ENCODE measurements at regions of chr14 and their contacts with region 1.

Region 1: GRCh38 chr14:93939304-93940229 is 12.4 kb downstream of the FAM181A start:
- DNase-seq: no peak
- H3K4me3 ChIP-seq: peak overlapping the region; percentile 50
- CTCF ChIP-seq: peak; percentile 85

Region 2: DNA sequence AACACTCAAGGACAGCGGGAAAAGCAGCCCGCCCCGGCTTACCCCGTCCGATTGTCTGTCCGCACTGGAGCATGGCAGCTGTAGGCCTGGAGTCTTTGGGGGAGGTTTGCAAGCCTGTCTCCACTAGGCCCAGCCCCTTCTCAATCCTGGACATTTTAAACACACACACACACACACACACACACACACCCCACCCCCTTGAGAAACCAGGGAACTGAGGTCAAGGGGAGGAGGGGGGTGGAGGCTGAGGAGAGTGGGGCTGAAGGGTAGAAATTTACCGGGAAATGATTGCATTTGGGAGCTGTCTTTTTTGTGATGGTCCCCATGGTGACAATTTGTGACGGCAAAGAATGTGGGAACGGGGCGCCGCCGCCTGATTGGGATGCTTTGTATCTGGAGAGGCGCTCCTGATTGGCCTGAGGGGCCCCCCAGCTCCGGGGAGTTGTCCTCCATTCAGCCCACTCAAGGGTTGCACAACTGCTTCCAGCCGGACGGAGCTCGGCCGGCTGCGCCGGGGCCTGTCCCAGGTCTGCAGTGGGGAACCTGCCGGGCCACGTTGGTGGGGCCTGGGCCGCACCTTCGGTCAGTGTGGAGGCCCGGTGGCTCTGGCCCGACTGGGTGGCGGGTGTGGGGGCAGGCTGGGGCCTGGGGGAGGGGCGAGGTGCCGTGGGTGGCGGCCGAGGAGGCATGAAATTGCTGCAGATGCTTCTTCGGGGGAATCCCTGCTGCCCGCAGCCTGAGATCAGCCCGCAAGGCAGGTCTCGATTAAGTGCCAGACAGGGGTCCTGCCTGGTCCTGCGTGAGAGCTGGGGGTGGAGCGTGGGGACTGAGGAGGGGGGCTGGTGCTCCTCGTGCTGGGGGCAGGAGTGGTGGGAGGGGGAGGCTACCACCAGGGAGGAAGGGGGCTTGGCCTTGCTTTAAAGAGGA is 12.4 kb before region 1 on chr14 and contains the start of gene FAM181A:
- CTCF ChIA-PET with region 1: interaction called, 42 read pairs
- POLR2A ChIA-PET with region 1: no interaction called
- DNase-seq: no peak
- H3K4me3 ChIP-seq: no peak within 1 kb of the TSS
- CTCF ChIP-seq: no peak

Region 3: GRCh38 chr14:93975791-93976476 is 36.4 kb after region 1 on chr14:
- CTCF ChIA-PET with region 1: interaction called, 135 read pairs
- POLR2A ChIA-PET with region 1: no interaction called
- DNase-seq: no peak
- H3K4me3 ChIP-seq: no peak overlapping the region
- CTCF ChIP-seq: no peak

Region 4: DNA sequence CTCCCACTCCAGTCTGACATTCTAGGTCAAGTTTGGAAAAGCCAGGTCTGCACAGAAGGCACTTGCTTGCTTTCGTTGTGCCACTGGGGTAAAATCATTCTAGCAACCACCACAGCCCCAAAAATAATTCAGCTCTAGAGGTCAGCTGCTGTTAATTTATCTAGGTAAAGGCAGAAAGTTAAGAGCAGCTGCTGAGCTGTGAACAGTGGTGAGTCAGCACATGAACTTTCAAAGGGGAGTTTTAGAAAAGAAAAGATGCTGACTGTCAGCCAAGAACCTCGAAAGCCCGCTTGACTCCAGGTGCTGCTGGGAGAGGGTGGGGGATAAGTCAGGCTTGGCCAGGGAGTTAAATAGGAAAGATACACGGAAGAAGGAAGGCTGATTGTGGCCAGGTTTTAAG is 70.2 kb after region 1 on chr14:
- CTCF ChIA-PET with region 1: interaction called, 472 read pairs
- POLR2A ChIA-PET with region 1: no interaction called
- DNase-seq: no peak
- H3K4me3 ChIP-seq: no peak overlapping the region
- CTCF ChIP-seq: no peak

Region 5: DNA sequence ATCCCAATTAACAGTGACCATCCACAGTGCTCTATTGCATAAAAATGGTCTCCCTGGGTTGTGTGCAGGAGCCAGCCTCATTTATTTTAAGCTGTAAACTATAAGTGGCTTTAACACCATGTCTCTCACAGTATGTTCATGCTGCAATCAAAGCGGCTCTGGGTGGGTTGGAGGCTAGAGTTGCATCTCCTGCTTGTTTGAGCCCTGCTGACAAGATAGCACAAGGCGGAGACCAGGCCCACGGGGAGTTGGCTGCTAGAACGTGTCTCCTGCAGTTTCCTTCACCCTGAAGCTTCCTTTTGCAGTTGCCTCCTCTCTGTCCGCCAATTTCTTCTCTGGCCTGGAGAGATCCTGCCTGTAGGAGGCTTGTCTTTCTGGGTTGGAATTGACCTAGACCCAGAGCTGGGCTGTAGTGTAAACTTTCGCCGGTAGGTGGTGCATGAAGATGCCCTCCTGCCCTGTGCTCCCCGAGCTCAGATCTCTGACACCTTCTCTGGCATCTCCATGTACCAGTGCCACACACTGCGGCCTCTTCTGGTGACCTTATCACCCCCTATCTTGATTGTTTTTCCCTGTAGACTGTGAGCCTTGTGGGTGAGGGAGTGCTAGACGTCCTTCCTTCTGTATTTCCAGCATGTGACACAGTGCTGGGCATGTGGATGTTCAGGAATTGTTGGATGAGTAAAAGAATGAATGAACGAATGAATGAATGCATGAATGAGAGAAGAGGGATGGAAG is 96.9 kb after region 1 on chr14:
- CTCF ChIA-PET with region 1: interaction called, 46 read pairs
- POLR2A ChIA-PET with region 1: no interaction called
- DNase-seq: no peak
- H3K4me3 ChIP-seq: no peak overlapping the region
- CTCF ChIP-seq: peak; percentile 87

Region 6: DNA sequence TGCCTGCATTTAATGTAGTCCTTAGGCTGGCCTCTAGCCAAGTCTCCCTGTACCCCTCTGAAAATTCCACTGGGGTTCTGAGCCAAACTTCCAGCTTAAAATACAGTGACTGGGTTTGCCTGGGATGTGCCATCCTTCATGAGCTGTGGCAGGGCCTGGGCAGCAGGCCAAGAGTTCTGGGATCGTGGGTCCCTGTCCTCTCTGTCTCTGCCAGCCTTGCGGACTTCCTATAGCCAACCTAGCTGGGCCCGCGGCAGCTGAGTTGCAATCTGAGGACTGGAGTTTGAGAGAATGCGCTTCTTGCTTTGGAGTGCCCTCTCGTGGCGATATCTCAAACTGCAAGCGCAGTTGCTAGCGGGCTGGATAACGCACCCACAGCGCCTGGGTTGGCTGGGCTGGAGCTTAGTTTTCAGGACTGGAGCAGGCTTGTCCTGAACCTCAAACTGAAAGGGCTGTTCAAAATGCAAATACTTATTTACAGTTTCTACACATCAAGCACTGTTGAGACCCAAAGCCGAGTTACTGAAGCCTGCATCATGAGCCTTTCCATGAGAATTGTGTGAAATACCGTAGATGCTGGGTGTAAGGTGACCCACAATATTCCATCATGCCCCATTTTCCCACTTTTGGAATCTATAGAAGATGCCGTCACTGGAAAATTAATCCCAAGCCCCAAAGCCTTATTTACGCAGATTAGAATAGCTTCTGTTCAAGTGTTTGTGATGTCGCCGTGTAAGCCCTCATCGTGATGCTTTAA is 197.2 kb after region 1 on chr14:
- CTCF ChIA-PET with region 1: interaction called, 83 read pairs
- POLR2A ChIA-PET with region 1: no interaction called
- DNase-seq: no peak
- H3K4me3 ChIP-seq: no peak overlapping the region
- CTCF ChIP-seq: peak; percentile 96